ENCODE measurements at regions of chr7 and their contacts with region 1.

Region 1: DNA sequence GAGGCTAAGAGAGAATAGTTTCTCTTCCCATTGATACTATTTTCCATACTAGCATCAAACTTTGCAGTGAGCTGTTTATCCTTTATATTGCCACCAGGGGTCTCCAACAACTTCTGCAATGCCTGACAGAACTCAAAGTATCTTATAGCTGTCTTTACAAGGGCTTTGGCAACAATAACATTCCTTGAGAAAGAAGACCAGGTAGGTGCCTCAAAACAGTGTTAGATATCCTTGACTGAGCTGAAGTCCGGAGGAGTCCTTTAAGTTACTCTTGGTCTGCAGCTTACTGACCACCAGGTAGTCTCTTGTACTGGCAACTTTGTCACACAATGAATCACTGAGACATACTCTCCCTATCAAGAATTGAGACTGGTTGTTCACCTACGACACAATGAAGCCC is 30.0 kb upstream of the TES start:
- DNase-seq: peak; percentile 73
- ATAC-seq: peak; percentile 76
- H3K4me3 ChIP-seq: no peak overlapping the region
- H3K27ac ChIP-seq: no peak overlapping the region
- H3K4me1 ChIP-seq: peaks cover 7% of the 10 kb centered on the region; the same call in 1 of the 2 replicates
- H3K27me3 ChIP-seq: no peaks in the 10 kb centered on the region
- CTCF ChIP-seq: peak; percentile 86

Region 2: DNA sequence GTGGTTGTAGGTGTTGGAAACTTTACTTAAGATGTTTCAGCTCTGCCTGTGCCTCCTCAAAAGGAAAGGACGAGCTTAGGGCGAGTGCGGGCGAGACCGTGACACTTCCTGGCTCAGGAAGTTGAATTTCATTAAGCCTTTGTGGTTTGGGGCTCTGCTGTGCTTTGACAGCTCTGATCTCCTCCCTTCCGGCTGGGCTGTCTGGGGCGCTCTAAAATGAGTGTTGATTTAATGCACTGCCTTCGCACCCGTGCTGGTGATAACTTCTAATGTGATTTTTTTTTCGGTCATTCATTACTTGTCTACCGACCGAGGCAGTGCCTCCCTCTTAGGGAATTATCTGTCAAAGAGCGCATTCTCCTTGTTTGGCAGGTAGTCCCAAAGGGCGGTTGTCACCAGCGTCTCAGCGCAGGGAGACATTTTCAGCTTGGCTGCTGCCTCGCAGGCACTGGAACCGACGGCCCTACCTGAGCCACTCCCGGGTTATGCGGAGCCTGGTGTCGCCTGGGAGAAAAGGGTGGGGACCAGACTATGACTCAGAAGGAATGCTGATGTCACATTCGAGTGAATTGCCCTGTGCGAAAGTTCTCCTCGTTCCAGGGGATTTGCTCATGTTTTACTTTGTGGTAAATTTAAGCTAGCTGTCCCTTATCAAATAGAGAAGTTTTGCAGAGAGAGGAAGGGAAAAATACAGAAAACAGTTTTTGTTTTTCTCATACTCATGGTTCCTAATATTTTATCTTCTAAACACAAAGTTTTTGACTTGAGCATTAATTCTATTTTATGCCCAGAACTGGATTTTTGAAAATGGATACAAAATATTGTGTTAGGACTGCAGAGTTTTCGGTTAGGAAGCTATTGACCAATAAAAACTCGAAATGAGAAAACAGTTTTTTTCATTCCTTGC is 31.0 kb after region 1 on chr7:
- CTCF ChIA-PET with region 1: interaction called, 13 read pairs
- POLR2A ChIA-PET with region 1: interaction called, 9 read pairs
- intact Hi-C with region 1: loop called (anchors 1 kb)
- DNase-seq: peak; percentile 95
- ATAC-seq: peak; percentile 75
- H3K4me3 ChIP-seq: peak overlapping the region; percentile 93
- H3K27ac ChIP-seq: peak overlapping the region; percentile 97
- H3K4me1 ChIP-seq: peaks cover 40% of the 10 kb centered on the region
- H3K27me3 ChIP-seq: no peaks in the 10 kb centered on the region
- CTCF ChIP-seq: no peak

Region 3: DNA sequence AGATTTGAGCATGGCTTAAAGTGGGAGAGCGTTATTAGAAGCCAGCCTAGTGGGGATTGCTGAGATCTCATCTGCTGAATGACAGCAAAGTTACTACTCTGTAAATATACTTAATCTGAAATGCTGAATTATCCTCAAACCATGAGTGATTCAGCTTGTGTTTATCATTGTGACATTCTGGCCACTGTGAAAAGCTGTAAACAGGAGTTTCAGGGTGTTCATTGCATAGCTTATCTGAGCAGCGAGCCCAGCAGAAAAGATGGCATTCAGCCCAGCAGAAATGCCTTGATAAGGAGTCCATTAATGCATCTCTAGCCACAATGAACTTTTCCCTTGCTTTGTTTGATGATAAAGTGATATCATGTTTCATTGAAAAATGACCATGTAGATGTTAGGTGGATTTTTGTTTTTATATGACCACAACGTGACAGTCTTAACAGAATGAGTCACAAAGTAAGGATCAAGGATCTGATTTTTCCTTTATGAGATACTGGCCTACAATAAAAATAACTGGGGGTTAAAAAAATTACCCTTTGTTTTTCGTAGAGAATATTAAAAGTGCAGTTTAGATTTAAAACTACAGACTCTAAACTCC is 37.8 kb after region 1 on chr7:
- CTCF ChIA-PET with region 1: interaction called, 10 read pairs
- POLR2A ChIA-PET with region 1: interaction called, 3 read pairs
- intact Hi-C with region 1: no loop called
- DNase-seq: peak; percentile 98
- ATAC-seq: peak; percentile 76
- H3K4me3 ChIP-seq: peak overlapping the region; percentile 60
- H3K27ac ChIP-seq: peak overlapping the region; percentile 97
- H3K4me1 ChIP-seq: peaks cover 64% of the 10 kb centered on the region
- H3K27me3 ChIP-seq: no peaks in the 10 kb centered on the region
- CTCF ChIP-seq: no peak

Region 4: GRCh38 chr7:116236020-116236630 is 55.8 kb after region 1 on chr7:
- CTCF ChIA-PET with region 1: interaction called, 15 read pairs
- POLR2A ChIA-PET with region 1: no interaction called
- intact Hi-C with region 1: loop called (anchors 1 kb)
- DNase-seq: peak; percentile 70
- ATAC-seq: peak; percentile 42
- H3K4me3 ChIP-seq: no peak overlapping the region
- H3K27ac ChIP-seq: no peak overlapping the region
- H3K4me1 ChIP-seq: peaks cover 26% of the 10 kb centered on the region
- H3K27me3 ChIP-seq: no peaks in the 10 kb centered on the region
- CTCF ChIP-seq: peak; percentile 72

Region 5: GRCh38 chr7:116455009-116455408 is 274.7 kb after region 1 on chr7:
- CTCF ChIA-PET with region 1: no interaction called
- POLR2A ChIA-PET with region 1: no interaction called
- intact Hi-C with region 1: no loop called
- DNase-seq: peak; percentile 84
- ATAC-seq: peak; percentile 87
- H3K4me3 ChIP-seq: peak overlapping the region; percentile 7; the same call in 1 of the 2 replicates
- H3K27ac ChIP-seq: peak overlapping the region; percentile 61
- H3K4me1 ChIP-seq: peaks cover 22% of the 10 kb centered on the region
- H3K27me3 ChIP-seq: no peaks in the 10 kb centered on the region
- CTCF ChIP-seq: no peak

Region 6: DNA sequence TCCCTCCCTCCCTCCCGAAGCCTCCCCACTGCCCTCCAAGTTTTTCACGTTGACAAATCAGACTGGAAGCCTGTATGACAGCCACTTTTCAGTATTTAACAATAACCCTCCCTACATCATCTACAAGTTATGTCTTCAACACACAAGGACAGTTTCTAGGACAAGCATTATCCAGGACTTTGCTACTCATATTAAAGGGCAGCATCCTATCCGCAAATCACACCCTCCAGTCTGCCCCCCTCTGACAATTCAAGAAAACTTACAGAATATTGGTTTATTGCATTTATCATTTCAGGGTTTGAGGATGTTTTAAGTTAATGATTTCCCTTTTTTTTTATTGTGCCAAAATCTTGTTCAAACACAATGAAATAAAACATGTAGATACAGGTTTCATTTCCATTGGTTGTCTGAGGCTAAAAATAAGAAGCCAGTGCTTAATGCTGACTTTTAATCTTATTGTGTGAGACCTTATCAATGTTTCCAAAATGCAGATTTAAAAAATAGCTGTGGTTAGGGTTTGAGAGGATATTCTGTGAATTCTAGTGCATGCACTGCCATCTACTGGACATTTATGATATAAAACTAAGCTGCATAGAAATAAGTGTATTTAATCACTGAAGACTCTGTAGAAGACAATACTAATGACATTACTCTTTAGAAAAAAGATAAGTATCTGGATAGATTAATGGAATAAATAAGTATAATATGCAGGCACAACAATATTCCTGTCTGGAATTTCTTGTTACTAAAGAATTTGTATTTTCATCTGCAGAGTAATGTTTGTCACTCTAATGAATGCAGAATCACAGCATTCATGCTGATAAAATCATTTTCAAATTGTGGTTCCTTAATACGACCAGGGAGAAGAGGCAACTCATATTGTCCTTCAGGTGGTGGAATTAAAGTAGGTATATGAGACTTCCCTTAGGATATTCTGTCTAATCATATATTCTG is 408.6 kb after region 1 on chr7:
- CTCF ChIA-PET with region 1: interaction called, 12 read pairs
- POLR2A ChIA-PET with region 1: no interaction called
- intact Hi-C with region 1: no loop called
- DNase-seq: peak; percentile 88
- ATAC-seq: peak; percentile 49
- H3K4me3 ChIP-seq: no peak overlapping the region
- H3K27ac ChIP-seq: peak overlapping the region; percentile 3; the same call in 1 of the 2 replicates
- H3K4me1 ChIP-seq: peaks cover 26% of the 10 kb centered on the region
- H3K27me3 ChIP-seq: no peaks in the 10 kb centered on the region
- CTCF ChIP-seq: peak; percentile 87